A673 (cell line): ENCODE measurements at regions of chr5 and their contacts with region 1.

Region 1: DNA sequence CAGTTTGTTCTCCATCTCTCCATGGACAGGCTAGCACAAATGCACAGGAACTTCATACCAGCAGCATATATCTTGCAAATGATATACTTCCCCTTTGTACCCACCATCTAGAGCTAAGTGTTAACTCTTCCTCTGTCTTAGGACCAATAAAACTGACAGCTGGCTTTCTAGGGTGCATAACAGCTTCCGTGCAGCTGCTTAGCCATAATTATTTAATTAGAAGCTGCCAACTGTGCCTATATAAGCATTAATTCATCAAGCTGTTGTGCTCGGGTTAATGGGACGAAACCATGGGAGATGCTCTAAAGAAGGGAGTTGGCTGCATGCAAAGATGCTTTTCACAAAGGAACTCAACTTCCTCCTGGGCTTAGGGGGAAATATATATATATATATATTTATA is 38.7 kb downstream of the KCTD16 start:
- DNase-seq: peak; percentile 70
- H3K4me3 ChIP-seq: no peak overlapping the region
- H3K27ac ChIP-seq: no peak overlapping the region
- H3K4me1 ChIP-seq: peaks cover 35% of the 10 kb centered on the region
- H3K27me3 ChIP-seq: peaks cover 11% of the 10 kb centered on the region
- CTCF ChIP-seq: no peak

Region 2: GRCh38 chr5:145110834-145111233 is 901.4 kb after region 1 on chr5:
- CTCF ChIA-PET with region 1: no interaction called
- POLR2A ChIA-PET with region 1: interaction called, 13 read pairs
- intact Hi-C with region 1: no loop called
- DNase-seq: no peak
- H3K4me3 ChIP-seq: no peak overlapping the region
- H3K27ac ChIP-seq: no peak overlapping the region
- H3K4me1 ChIP-seq: no peaks in the 10 kb centered on the region
- H3K27me3 ChIP-seq: no peaks in the 10 kb centered on the region
- CTCF ChIP-seq: no peak